ENCODE measurements at regions of chr17 and their contacts with region 1.

Region 1: GRCh38 chr17:72556944-72557826 is 436.4 kb downstream of the SOX9 start:
- DNase-seq: peak; percentile 75 to 82
- H3K4me3 ChIP-seq: no peak overlapping the region
- H3K4me3 Mint-ChIP-seq: no peak overlapping the region
- H3K27ac Mint-ChIP-seq: no peak overlapping the region
- H3K4me1 ChIP-seq: no peaks in the 10 kb centered on the region
- H3K4me1 Mint-ChIP-seq: no peaks in the 10 kb centered on the region
- H3K27me3 ChIP-seq: no peaks in the 10 kb centered on the region
- H3K27me3 Mint-ChIP-seq: no peaks in the 10 kb centered on the region
- CTCF ChIP-seq: peak; percentile 82 to 90

Region 2: GRCh38 chr17:72351884-72352346 is 205.3 kb before region 1 on chr17:
- CTCF ChIA-PET with region 1: no interaction called
- POLR2A ChIA-PET with region 1: no interaction called
- intact Hi-C with region 1: no loop called
- DNase-seq: peak; percentile 24 to 46
- H3K4me3 ChIP-seq: no peak overlapping the region
- H3K4me3 Mint-ChIP-seq: no peak overlapping the region
- H3K27ac Mint-ChIP-seq: peak overlapping the region; percentile 16
- H3K4me1 ChIP-seq: 0 out of 2 replicates have a peak, but pooled peaks cover 4% of the 10 kb centered on the region
- H3K4me1 Mint-ChIP-seq: no peaks in the 10 kb centered on the region
- H3K27me3 ChIP-seq: no peaks in the 10 kb centered on the region
- H3K27me3 Mint-ChIP-seq: no peaks in the 10 kb centered on the region
- CTCF ChIP-seq: no peak

Region 3: DNA sequence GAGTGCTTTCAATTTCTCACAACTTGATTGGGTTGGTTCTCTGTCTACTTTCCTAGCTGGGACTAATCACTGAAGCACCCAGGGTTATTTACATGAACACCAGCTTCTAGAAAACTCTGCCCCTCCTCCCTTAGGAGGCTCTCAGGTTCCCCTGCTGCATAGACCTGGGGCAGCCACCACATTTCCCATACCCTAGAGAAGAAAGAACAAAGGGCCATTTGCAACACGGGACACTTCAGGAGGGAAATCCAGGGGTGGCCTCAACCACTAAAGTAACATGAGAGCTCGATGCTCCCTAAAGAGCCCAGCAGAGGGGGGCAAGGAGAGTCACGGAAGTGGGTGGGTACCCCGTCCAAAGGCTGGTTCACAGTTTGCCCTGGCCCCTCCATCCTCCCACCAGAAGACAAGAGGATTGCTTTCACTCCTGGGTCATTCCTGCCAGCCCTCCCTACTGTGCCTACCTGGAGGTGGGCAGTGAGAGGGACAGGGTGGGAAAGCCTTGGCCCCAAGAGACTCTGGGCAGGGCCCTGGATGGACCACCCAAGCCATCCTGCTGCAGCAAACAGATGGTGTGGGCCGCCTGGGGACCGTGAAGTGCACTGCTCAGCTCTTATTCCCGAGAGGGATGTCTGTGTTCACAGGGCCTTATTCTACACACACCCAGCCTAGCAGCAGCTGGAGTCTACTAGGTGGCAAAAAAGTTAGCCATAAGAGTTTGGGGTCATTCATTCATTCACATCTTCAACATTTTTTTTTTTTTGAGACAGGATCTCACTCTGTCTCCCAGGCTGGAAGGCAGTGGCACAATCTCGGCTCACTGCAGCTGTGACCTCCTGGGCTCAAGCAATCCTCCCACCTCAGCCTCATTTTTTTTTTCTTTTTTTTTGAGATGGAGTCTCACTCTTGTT is 44.3 kb before region 1 on chr17:
- CTCF ChIA-PET with region 1: no interaction called
- POLR2A ChIA-PET with region 1: no interaction called
- intact Hi-C with region 1: no loop called
- DNase-seq: no peak
- H3K4me3 ChIP-seq: no peak overlapping the region
- H3K4me3 Mint-ChIP-seq: no peak overlapping the region
- H3K27ac Mint-ChIP-seq: no peak overlapping the region
- H3K4me1 ChIP-seq: peaks cover 26% of the 10 kb centered on the region
- H3K4me1 Mint-ChIP-seq: peaks cover 23% of the 10 kb centered on the region
- H3K27me3 ChIP-seq: no peaks in the 10 kb centered on the region
- H3K27me3 Mint-ChIP-seq: no peaks in the 10 kb centered on the region
- CTCF ChIP-seq: no peak

Region 4: DNA sequence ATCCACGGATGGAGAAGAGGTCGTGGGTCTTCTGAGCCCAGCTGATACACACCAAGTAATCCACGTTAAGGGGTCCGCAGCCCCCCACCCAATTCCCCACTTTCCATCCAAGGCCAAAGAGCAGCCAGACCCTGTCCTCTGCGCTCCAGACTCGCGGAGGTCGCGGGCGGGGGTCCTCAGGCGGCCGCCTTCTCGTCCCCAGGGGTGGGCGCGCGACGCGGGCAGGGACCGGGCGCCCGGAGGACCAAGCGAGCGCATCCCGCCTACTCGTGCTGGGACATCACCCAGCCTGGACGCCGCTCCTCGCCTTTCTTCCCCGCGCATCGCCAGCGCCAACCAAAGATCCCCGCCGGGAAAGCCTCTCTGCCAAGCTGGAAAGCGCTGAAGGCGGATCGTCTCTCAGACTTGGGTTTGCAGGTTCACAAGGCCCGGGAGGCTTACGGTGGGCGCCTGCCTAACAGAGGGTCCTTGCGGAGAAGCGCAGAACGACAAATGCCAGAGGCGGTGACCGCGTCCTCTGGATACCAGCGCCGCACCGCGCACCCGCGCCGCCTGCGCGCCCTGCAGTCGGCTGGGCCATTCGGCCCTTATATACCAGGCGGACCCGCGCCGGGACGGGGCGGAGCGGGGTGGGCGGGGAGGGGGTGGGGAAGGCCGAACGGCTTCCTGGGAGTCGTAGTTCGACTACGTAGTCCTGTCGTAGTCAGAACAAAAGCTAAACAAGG is 35.2 kb after region 1 on chr17:
- CTCF ChIA-PET with region 1: interaction called, 9 read pairs
- POLR2A ChIA-PET with region 1: interaction called, 5 read pairs
- intact Hi-C with region 1: loop called (anchors 2 kb)
- DNase-seq: peak; percentile 87 to 90
- H3K4me3 ChIP-seq: peak overlapping the region; percentile 65
- H3K4me3 Mint-ChIP-seq: peak overlapping the region; percentile 74
- H3K27ac Mint-ChIP-seq: peak overlapping the region; percentile 55
- H3K4me1 ChIP-seq: peaks cover 20% of the 10 kb centered on the region
- H3K4me1 Mint-ChIP-seq: peaks cover 25% of the 10 kb centered on the region
- H3K27me3 ChIP-seq: no peaks in the 10 kb centered on the region; the same call in 1 of the 2 replicates
- H3K27me3 Mint-ChIP-seq: peaks cover 3% of the 10 kb centered on the region
- CTCF ChIP-seq: peak in 1 of 2 experiments; percentile 4

Region 5: GRCh38 chr17:72661093-72661944 is 104.1 kb after region 1 on chr17:
- CTCF ChIA-PET with region 1: interaction called, 12 read pairs
- POLR2A ChIA-PET with region 1: no interaction called
- intact Hi-C with region 1: loop called (anchors 1 kb)
- DNase-seq: no peak
- H3K4me3 ChIP-seq: no peak overlapping the region
- H3K4me3 Mint-ChIP-seq: no peak overlapping the region
- H3K27ac Mint-ChIP-seq: no peak overlapping the region
- H3K4me1 ChIP-seq: peaks cover 15% of the 10 kb centered on the region
- H3K4me1 Mint-ChIP-seq: peaks cover under 1% of the 10 kb centered on the region
- H3K27me3 ChIP-seq: no peaks in the 10 kb centered on the region
- H3K27me3 Mint-ChIP-seq: no peaks in the 10 kb centered on the region
- CTCF ChIP-seq: peak; percentile 29 to 31

Region 6: GRCh38 chr17:72725433-72726068 is 168.4 kb after region 1 on chr17:
- CTCF ChIA-PET with region 1: interaction called, 42 read pairs
- POLR2A ChIA-PET with region 1: no interaction called
- intact Hi-C with region 1: loop called (anchors 1 kb)
- DNase-seq: peak; percentile 62 to 78
- H3K4me3 ChIP-seq: no peak overlapping the region
- H3K4me3 Mint-ChIP-seq: no peak overlapping the region
- H3K27ac Mint-ChIP-seq: no peak overlapping the region
- H3K4me1 ChIP-seq: no peaks in the 10 kb centered on the region
- H3K4me1 Mint-ChIP-seq: peaks cover 12% of the 10 kb centered on the region
- H3K27me3 ChIP-seq: no peaks in the 10 kb centered on the region; the same call in 1 of the 2 replicates
- H3K27me3 Mint-ChIP-seq: no peaks in the 10 kb centered on the region
- CTCF ChIP-seq: peak; percentile 95 to 97

Region 7: GRCh38 chr17:73192894-73193701 is 635.9 kb after region 1 on chr17 and contains the start of gene COG1:
- CTCF ChIA-PET with region 1: interaction called, 18 read pairs
- POLR2A ChIA-PET with region 1: no interaction called
- intact Hi-C with region 1: loop called (anchors 2 kb)
- DNase-seq: peak; percentile 81 to 83
- H3K4me3 ChIP-seq: peak within 1 kb of the TSS; percentile 95
- H3K4me3 Mint-ChIP-seq: peak within 1 kb of the TSS; percentile 100
- H3K27ac Mint-ChIP-seq: peak within 1 kb of the TSS; percentile 99
- H3K4me1 ChIP-seq: no peaks in the 10 kb centered on the region; the same call in 1 of the 2 replicates
- H3K4me1 Mint-ChIP-seq: no peaks in the 10 kb centered on the region
- H3K27me3 ChIP-seq: no peaks in the 10 kb centered on the region
- H3K27me3 Mint-ChIP-seq: no peaks in the 10 kb centered on the region
- CTCF ChIP-seq: peak in 1 of 2 experiments; percentile 4
- total RNA-seq, gene COG1: 36.8 and 37.3 TPM in 2 replicates